WTC11 (cell line): ENCODE measurements at regions of chr6 and their contacts with region 1.

Region 1: GRCh38 chr6:25992413-25993037 is 29.9 kb downstream of the TRIM38 start:
- DNase-seq: peak; percentile 95
- ATAC-seq: peak; percentile 89
- H3K4me3 Mint-ChIP-seq: peak overlapping the region; percentile 96
- H3K27ac Mint-ChIP-seq: peak overlapping the region; percentile 89
- H3K4me1 Mint-ChIP-seq: peaks cover 33% of the 10 kb centered on the region
- H3K27me3 Mint-ChIP-seq: no peaks in the 10 kb centered on the region
- CTCF ChIP-seq: peak; percentile 91

Region 2: GRCh38 chr6:25899123-25899522 is 93.4 kb before region 1 on chr6:
- CTCF ChIA-PET with region 1: interaction called, 24 read pairs
- POLR2A ChIA-PET with region 1: no interaction called
- DNase-seq: no peak
- ATAC-seq: peak; percentile 78
- H3K4me3 Mint-ChIP-seq: no peak overlapping the region
- H3K27ac Mint-ChIP-seq: no peak overlapping the region
- H3K4me1 Mint-ChIP-seq: peaks cover 22% of the 10 kb centered on the region
- H3K27me3 Mint-ChIP-seq: no peaks in the 10 kb centered on the region; the same call in 1 of the 2 replicates
- CTCF ChIP-seq: no peak

Region 3: GRCh38 chr6:26006086-26006939 is 13.8 kb after region 1 on chr6:
- CTCF ChIA-PET with region 1: interaction called, 13 read pairs
- POLR2A ChIA-PET with region 1: interaction called, 3 read pairs
- DNase-seq: no peak
- ATAC-seq: peak; percentile 48; the same call in 1 of the 2 replicates
- H3K4me3 Mint-ChIP-seq: no peak overlapping the region
- H3K27ac Mint-ChIP-seq: no peak overlapping the region
- H3K4me1 Mint-ChIP-seq: peaks cover 23% of the 10 kb centered on the region
- H3K27me3 Mint-ChIP-seq: no peaks in the 10 kb centered on the region
- CTCF ChIP-seq: no peak

Region 4: DNA sequence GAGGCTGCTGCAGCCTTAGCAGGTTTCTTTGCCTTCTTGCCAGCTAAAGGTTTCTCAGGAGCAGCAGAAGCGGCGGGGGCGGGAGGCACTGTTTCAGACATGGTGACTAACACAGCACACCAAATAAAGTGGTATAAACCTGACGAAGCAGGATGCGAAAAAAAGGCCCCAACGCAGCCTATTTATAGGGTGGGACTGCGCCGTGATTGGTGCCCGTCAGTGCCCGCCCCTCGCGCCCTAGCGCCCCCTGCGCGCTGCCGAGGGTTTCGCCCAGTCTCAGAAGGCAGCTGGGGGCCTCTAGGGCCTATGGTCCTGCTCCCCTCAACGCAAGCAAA is 25.1 kb after region 1 on chr6:
- CTCF ChIA-PET with region 1: interaction called, 23 read pairs
- POLR2A ChIA-PET with region 1: interaction called, 15 read pairs
- DNase-seq: peak; percentile 83
- ATAC-seq: peak; percentile 33
- H3K4me3 Mint-ChIP-seq: peak overlapping the region; percentile 76
- H3K27ac Mint-ChIP-seq: peak overlapping the region; percentile 96
- H3K4me1 Mint-ChIP-seq: peaks cover 36% of the 10 kb centered on the region
- H3K27me3 Mint-ChIP-seq: no peaks in the 10 kb centered on the region
- CTCF ChIP-seq: no peak